Activated B cell treated with CpG ODN at 0.5 μM for 24 hours (primary cell): ENCODE measurements at regions of chr7 and their contacts with region 1.

Region 1: GRCh38 chr7:114979388-114979787 is 57.5 kb downstream of the MDFIC start:
- DNase-seq: no peak
- ATAC-seq: no peak
- H3K4me3 Mint-ChIP-seq: no peak overlapping the region
- H3K27ac Mint-ChIP-seq: no peak overlapping the region
- H3K4me1 Mint-ChIP-seq: peaks cover 69% of the 10 kb centered on the region
- H3K27me3 Mint-ChIP-seq: no peaks in the 10 kb centered on the region
- CTCF ChIP-seq: no peak

Region 2: DNA sequence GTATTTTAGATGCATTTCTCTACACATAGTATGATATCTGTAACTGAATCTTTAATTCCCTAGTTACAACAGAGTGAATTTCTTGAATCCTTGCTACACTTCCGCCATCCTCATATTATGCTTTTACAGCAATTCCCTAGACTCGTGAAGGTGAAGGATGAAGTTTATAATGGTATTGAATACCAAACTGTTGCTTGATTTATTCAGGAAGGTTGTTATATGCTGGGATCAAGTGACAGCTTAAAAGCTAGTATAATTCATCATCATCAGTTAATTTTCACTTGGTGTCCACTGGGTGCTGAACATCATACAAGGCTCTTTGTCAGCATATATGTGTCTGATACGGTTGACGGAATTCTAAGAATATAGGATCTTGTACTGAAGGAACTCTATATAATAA is 10.3 kb before region 1 on chr7:
- CTCF ChIA-PET with region 1: no interaction called
- POLR2A ChIA-PET with region 1: interaction called, 4 read pairs
- intact Hi-C with region 1: loop called (anchors 2 kb)
- DNase-seq: no peak
- ATAC-seq: no peak
- H3K4me3 Mint-ChIP-seq: no peak overlapping the region
- H3K27ac Mint-ChIP-seq: no peak overlapping the region
- H3K4me1 Mint-ChIP-seq: peaks cover 65% of the 10 kb centered on the region
- H3K27me3 Mint-ChIP-seq: no peaks in the 10 kb centered on the region
- CTCF ChIP-seq: no peak

Region 3: DNA sequence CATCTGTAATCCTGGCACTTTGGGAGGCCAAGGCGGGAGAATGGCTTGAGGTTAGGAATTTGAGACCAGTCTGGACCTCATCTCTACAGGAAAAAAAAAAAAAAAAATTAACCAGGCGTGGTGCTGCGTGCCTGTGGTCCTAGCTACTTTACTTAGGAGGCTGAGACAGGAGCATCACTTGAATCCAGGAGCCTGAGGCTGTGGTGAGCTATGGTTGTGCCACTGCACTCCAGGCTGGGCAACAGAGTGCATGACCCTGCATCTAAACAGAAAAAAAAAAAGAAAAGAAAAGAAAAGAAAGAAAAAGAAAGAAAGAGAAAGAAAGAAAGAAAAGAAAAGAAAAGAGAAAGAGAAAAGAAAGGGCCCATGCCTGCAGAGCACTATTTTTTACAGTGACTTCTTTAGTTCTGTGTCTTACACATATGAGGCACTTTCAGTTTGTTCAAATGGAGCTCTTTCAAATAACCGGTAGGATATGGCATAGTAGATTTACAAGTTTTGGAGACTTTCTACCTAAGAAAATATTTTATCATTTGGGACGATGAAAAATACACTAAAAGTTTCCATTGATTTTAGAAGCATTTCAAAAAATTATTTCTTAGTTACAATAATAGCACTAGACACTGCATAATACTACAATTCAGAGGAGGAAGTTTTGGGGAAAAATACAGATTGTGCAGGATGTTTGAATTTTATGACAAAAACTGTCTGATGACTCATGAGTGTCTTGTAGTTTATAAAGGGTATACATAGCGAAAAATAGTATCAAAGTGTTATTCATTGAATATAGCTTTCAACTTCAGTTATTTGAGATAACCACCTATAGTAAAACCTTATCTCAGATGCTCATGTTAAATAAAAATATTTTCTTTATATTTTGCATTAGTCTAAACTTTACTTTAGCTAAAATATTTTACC is 18.4 kb after region 1 on chr7:
- CTCF ChIA-PET with region 1: no interaction called
- POLR2A ChIA-PET with region 1: no interaction called
- intact Hi-C with region 1: no loop called
- DNase-seq: no peak
- ATAC-seq: no peak
- H3K4me3 Mint-ChIP-seq: no peak overlapping the region
- H3K27ac Mint-ChIP-seq: peak overlapping the region; percentile 10
- H3K4me1 Mint-ChIP-seq: peaks cover 27% of the 10 kb centered on the region
- H3K27me3 Mint-ChIP-seq: no peaks in the 10 kb centered on the region
- CTCF ChIP-seq: no peak